Activated CD4-positive, alpha-beta memory T cell treated with anti-CD3 and anti-CD28 coated beads, Interleukin-2, amount 10 ng/mL, durations not matched to agents 7 days and 5 days (primary cell): ENCODE measurements at regions of chr20 and their contacts with region 1.

Region 1: GRCh38 chr20:2470423-2471193 is at the start of gene SNRPB:
- DNase-seq: peak; percentile 97
- H3K4me3 Mint-ChIP-seq: peak within 1 kb of the TSS; percentile 98
- H3K27ac Mint-ChIP-seq: peak within 1 kb of the TSS; percentile 90
- H3K4me1 Mint-ChIP-seq: peaks cover 52% of the 10 kb centered on the region
- H3K27me3 Mint-ChIP-seq: no peaks in the 10 kb centered on the region
- total RNA-seq, gene SNRPB: 310 TPM

Region 2: DNA sequence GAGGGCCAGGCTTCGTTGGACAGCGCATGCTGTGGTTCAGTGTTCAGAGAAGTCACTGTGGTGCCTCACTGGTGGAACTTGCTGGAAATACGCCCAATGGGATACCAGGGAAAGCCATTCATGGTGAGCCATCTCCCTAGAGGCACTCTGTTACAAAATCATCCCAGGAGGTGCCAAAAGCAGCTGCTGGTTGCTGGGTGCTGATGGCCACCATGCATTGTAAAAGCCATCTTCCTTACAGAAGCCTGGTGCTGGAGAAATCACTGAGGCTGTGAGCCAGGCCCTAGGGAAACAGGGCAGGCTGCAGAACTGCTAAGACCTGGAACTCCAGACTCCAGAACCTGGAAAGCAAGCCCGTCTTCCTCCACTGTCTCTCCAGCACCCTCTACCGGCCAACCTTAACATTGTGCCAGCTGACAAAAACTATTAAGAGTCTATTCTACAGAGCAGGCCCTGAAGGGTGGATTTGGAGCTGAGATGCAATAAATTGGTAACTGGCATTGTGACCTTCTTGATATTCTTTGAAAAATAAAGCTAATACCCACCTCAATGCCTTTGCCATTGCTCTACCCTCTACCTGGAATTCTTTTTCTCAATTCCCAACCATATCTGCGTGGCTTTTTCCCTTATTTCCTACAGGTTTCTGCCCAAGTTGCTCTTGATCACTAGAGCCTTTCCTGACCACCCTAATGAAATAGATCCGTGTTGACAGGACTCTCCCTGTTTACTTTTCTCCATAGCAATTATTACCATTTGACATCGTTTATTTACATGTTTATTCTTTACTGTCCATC is 18.5 kb before region 1 on chr20:
- CTCF ChIA-PET with region 1: interaction called, 37 read pairs
- POLR2A ChIA-PET with region 1: interaction called, 81 read pairs
- DNase-seq: peak; percentile 72
- H3K4me3 Mint-ChIP-seq: no peak overlapping the region
- H3K27ac Mint-ChIP-seq: no peak overlapping the region
- H3K4me1 Mint-ChIP-seq: peaks cover 19% of the 10 kb centered on the region
- H3K27me3 Mint-ChIP-seq: peaks cover 5% of the 10 kb centered on the region

Region 3: DNA sequence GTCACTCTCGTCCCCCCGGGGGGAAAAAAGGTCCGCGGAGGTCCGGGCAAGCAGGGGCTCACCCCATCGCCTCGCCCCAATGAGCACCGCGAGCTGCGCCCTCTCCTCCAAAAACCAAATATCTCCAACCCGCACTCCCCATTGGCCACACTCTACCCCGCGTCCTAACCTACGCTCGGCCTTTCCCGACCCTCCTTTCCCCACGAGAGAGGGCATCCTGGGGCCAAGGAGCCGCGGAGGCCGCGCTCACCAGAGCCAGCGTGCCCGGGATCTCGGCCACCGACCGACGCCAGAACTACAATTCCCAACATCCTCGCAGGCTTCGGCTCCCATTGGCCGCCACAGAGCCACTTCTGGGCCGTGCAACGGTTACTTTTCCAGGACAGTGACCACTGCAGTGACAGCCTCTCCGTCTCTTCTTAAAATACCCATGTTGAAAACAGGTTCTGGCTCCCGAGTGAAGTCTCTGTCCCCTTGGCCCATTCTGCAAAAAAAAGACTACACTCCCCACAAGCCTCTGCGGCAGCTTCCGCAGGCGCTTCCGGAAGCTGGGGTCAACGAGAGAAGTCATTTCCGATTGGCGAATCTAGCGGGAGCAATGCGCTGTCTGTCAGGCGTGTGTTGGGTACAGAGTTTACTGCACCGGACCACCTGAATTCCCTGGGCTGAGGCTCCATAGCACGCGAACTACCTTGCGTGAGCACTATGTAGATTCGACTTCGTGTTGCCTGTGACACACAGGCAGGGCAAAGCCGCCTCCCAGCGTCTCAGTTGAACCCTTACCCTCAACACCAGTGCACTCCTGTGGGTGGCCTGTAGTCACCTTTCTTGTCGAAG is 38.2 kb after region 1 on chr20 and contains the start of gene ZNF343:
- CTCF ChIA-PET with region 1: interaction called, 5 read pairs
- POLR2A ChIA-PET with region 1: interaction called, 33 read pairs
- DNase-seq: peak; percentile 83
- H3K4me3 Mint-ChIP-seq: peak within 1 kb of the TSS; percentile 97
- H3K27ac Mint-ChIP-seq: peak within 1 kb of the TSS; percentile 93
- H3K4me1 Mint-ChIP-seq: peaks cover 20% of the 10 kb centered on the region
- H3K27me3 Mint-ChIP-seq: peaks cover 27% of the 10 kb centered on the region
- total RNA-seq, gene ZNF343: 6.2 to 8.8 TPM

Region 4: GRCh38 chr20:2523919-2524708 is 53.5 kb after region 1 on chr20:
- CTCF ChIA-PET with region 1: interaction called, 88 read pairs
- POLR2A ChIA-PET with region 1: interaction called, 24 read pairs
- DNase-seq: peak; percentile 91
- H3K4me3 Mint-ChIP-seq: peak overlapping the region; percentile 88
- H3K27ac Mint-ChIP-seq: peak overlapping the region; percentile 71
- H3K4me1 Mint-ChIP-seq: peaks cover 33% of the 10 kb centered on the region
- H3K27me3 Mint-ChIP-seq: peaks cover 3% of the 10 kb centered on the region

Region 5: GRCh38 chr20:2663887-2664719 is 193.5 kb after region 1 on chr20 and contains the start of gene IDH3B:
- CTCF ChIA-PET with region 1: no interaction called
- POLR2A ChIA-PET with region 1: interaction called, 12 read pairs
- DNase-seq: peak; percentile 95
- H3K4me3 Mint-ChIP-seq: peak within 1 kb of the TSS; percentile 84
- H3K27ac Mint-ChIP-seq: peak within 1 kb of the TSS; percentile 95
- H3K4me1 Mint-ChIP-seq: peaks cover 34% of the 10 kb centered on the region
- H3K27me3 Mint-ChIP-seq: peaks cover 8% of the 10 kb centered on the region
- total RNA-seq, gene IDH3B: 78.8 to 82.2 TPM

Region 6: GRCh38 chr20:2697768-2698167 is 227.2 kb after region 1 on chr20:
- CTCF ChIA-PET with region 1: no interaction called
- POLR2A ChIA-PET with region 1: no interaction called
- DNase-seq: peak; percentile 9
- H3K4me3 Mint-ChIP-seq: no peak overlapping the region
- H3K27ac Mint-ChIP-seq: no peak overlapping the region
- H3K4me1 Mint-ChIP-seq: no peaks in the 10 kb centered on the region
- H3K27me3 Mint-ChIP-seq: peaks cover 36% of the 10 kb centered on the region